Heart left ventricle (tissue), 16 donors: ENCODE measurements at regions of chr2 and their contacts with region 1.

Region 1: DNA sequence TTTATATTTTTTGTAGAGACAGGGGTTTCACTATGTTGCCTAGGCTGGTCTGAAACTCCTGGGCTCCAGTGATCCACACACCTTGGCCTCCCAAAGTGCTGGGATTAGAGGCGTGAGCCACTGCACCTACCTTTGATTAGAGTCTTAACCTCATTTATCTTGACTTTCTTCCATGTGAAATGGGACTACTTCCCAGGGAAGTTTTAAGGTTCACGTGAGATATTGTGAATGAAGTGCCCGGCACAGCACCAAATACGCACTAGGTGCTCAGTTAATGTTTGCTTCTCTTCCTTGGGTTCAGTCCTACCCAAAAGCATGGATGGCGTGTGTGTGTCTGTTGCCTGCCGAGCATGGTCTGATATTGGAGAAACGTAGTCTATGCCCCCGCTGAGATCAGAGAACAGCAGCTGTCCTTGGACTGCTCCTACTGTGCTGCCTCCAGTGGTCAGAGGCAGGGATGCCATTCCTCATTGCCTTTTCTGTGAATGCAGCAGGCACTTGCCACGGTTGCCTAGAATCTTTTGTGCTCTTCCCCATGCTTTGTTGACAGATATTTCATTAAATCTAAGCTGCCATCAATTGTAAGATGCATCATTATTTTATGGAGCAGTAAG is 12.3 kb upstream of the TFCP2L1 start:
- DNase-seq: no peak
- ATAC-seq: peak in 3 of 4 donors; percentile 58 to 79 (median 71)
- H3K4me3 ChIP-seq: no peak overlapping the region
- H3K27ac ChIP-seq: no peak overlapping the region
- H3K4me1 ChIP-seq: no peaks in the 10 kb centered on the region
- H3K27me3 ChIP-seq: no peaks in the 10 kb centered on the region
- CTCF ChIP-seq: peak in 11 of 12 donors; percentile 24 to 65 (median 42)
- POLR2A ChIP-seq: no peak

Region 2: GRCh38 chr2:120441744-120442471 is 855.4 kb before region 1 on chr2:
- intact Hi-C with region 1: no loop called
- DNase-seq: no peak
- ATAC-seq: peak in 3 of 4 donors; percentile 40 to 66 (median 64)
- H3K4me3 ChIP-seq: peak overlapping the region; percentile 0 to 49 (median 38)
- H3K27ac ChIP-seq: no peak overlapping the region
- H3K4me1 ChIP-seq: peaks cover 5 to 17% (median 15%) of the 10 kb centered on the region in 12 donors
- H3K27me3 ChIP-seq: peaks cover 6 to 52% (median 23%) of the 10 kb centered on the region in 9 donors
- CTCF ChIP-seq: no peak
- POLR2A ChIP-seq: no peak

Region 3: GRCh38 chr2:121095257-121096080 is 201.9 kb before region 1 on chr2:
- intact Hi-C with region 1: loop called in 1 of 10 experiments (anchors 10 kb)
- DNase-seq: peak; percentile 45 to 77 (median 64)
- ATAC-seq: peak; percentile 18 to 48 (median 36)
- H3K4me3 ChIP-seq: no peak overlapping the region
- H3K27ac ChIP-seq: no peak overlapping the region
- H3K4me1 ChIP-seq: peaks cover 0 to 11% (median 2%) of the 10 kb centered on the region in 12 donors
- H3K27me3 ChIP-seq: no peaks in the 10 kb centered on the region
- CTCF ChIP-seq: peak; percentile 53 to 68 (median 59)
- POLR2A ChIP-seq: no peak

Region 4: GRCh38 chr2:121128754-121129659 is 168.3 kb before region 1 on chr2:
- intact Hi-C with region 1: loop called in 1 of 10 experiments (anchors 10 kb)
- DNase-seq: peak in 1 of 5 donors; percentile 40
- ATAC-seq: peak in 3 of 4 donors; percentile 43 to 61 (median 52)
- H3K4me3 ChIP-seq: no peak overlapping the region
- H3K27ac ChIP-seq: no peak overlapping the region
- H3K4me1 ChIP-seq: no peaks in the 10 kb centered on the region
- H3K27me3 ChIP-seq: peaks cover 0 to 13% (median 0%) of the 10 kb centered on the region in 9 donors
- CTCF ChIP-seq: peak; percentile 29 to 60 (median 44)
- POLR2A ChIP-seq: no peak

Region 5: DNA sequence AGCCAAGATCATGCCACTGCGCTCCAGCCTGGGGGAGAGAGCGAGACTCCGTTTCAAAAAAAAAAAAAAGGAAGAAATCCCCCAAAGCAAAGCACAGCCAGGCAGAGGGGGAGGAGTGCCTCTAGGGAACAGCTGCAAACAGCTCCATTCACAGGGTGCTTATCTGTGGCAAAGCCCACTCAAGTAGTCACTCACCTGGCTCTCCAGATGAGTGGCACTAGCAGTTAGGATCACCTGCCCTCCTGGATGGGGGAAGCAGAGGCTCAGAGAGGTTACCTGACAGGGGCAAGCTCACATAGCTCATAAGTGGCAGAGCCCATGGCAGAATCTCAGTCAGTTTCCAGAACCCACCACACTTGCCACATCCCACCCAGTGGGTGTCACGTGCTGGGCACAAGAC is 42.6 kb before region 1 on chr2:
- intact Hi-C with region 1: no loop called
- DNase-seq: no peak
- ATAC-seq: no peak
- H3K4me3 ChIP-seq: no peak overlapping the region
- H3K27ac ChIP-seq: no peak overlapping the region
- H3K4me1 ChIP-seq: no peaks in the 10 kb centered on the region
- H3K27me3 ChIP-seq: no peaks in the 10 kb centered on the region
- CTCF ChIP-seq: no peak
- POLR2A ChIP-seq: no peak